Mammary epithelial cell (primary cell): ENCODE measurements at regions of chr10 and their contacts with region 1.

Region 1: DNA sequence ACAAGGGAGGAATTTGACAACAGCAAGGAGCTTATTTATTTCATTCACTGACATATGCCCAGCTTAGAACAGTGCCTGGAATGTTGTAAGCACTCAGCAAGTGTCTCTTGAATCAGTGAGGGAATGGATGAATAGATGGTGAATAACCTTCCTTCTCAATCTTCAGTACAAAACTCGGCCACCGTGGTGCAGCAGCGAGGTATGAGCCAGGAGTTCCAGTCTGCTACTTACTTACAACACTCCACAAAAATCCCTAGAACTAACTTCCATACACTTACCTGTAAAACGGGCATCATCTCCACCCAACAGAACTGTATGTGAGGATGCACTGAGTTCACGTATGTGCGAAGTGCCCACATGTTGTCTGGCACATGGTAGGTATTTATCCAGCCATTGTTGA is 237.4 kb downstream of the WDR11 start:
- DNase-seq: peak; percentile 68
- H3K4me3 ChIP-seq: no peak overlapping the region
- H3K27ac ChIP-seq: no peak overlapping the region
- H3K4me1 ChIP-seq: peaks cover 12% of the 10 kb centered on the region
- H3K27me3 ChIP-seq: no peaks in the 10 kb centered on the region
- CTCF ChIP-seq: peak; percentile 67 to 75

Region 2: GRCh38 chr10:121049489-121049888 is 39.0 kb before region 1 on chr10:
- CTCF ChIA-PET with region 1: no interaction called
- dilution Hi-C with region 1: loop called (anchors 5 kb)
- in situ Hi-C with region 1: no loop called
- intact Hi-C with region 1: no loop called
- DNase-seq: no peak
- H3K4me3 ChIP-seq: no peak overlapping the region
- H3K27ac ChIP-seq: no peak overlapping the region
- H3K4me1 ChIP-seq: no peaks in the 10 kb centered on the region
- H3K27me3 ChIP-seq: no peaks in the 10 kb centered on the region
- CTCF ChIP-seq: no peak

Region 3: GRCh38 chr10:121527666-121528065 is 439.1 kb after region 1 on chr10:
- CTCF ChIA-PET with region 1: no interaction called
- dilution Hi-C with region 1: no loop called
- in situ Hi-C with region 1: no loop called
- intact Hi-C with region 1: no loop called
- DNase-seq: peak; percentile 48
- H3K4me3 ChIP-seq: no peak overlapping the region
- H3K27ac ChIP-seq: no peak overlapping the region
- H3K4me1 ChIP-seq: peaks cover 32% of the 10 kb centered on the region
- H3K27me3 ChIP-seq: no peaks in the 10 kb centered on the region
- CTCF ChIP-seq: no peak